Panc1 (cell line): ENCODE measurements at regions of chr5 and their contacts with region 1.

Region 1: DNA sequence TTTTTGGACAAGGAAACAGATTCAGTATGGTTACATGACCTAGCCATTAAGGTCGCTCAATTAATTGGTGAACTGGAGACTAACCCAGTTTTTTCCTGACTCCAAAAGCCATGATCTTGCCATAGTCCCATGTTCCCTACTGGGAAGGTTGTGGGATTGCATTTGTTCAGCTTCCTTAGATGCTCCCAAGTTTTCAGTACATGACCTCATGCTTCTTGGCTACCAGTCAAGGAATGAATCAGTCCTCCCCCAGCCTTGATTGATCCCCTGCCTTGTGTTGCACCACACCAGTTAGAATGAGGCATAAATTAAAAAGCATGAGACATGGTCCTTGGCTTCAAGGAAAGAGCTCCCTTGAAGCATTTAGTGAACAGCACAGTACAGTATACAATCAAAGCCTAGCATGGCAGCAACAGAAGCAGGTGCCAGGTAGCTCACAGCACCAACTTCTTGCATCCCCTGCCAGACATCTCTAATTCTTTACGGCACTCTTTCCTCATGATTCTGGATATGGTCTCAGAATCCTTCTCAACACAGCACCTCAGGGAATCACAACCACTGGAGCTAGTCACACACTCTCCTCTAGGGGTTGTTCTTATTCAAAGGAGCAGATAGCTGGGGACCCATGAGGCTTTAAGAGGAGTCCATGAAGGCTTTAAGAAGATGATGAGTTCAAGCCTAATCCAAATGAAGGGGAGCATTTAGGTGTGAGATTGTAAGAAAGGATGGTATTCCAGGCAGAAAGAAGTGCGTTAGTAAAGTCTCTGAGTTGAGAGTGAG is 295.5 kb upstream of the CLINT1 start:
- DNase-seq: no peak
- ATAC-seq: no peak
- H3K4me3 ChIP-seq: no peak overlapping the region
- H3K27ac ChIP-seq: no peak overlapping the region
- H3K4me1 ChIP-seq: no peaks in the 10 kb centered on the region
- H3K27me3 ChIP-seq: no peaks in the 10 kb centered on the region
- CTCF ChIP-seq: no peak

Region 2: GRCh38 chr5:159764283-159765134 is 1610.1 kb after region 1 on chr5:
- CTCF ChIA-PET with region 1: no interaction called
- POLR2A ChIA-PET with region 1: no interaction called
- in situ Hi-C with region 1: no loop called
- intact Hi-C with region 1: loop called (anchors 10 kb)
- DNase-seq: no peak
- ATAC-seq: no peak
- H3K4me3 ChIP-seq: no peak overlapping the region
- H3K27ac ChIP-seq: no peak overlapping the region
- H3K4me1 ChIP-seq: no peaks in the 10 kb centered on the region
- H3K27me3 ChIP-seq: no peaks in the 10 kb centered on the region
- CTCF ChIP-seq: no peak